Uterus (tissue), 4 donors: ENCODE measurements at regions of chr7 and their contacts with region 1.

Region 1: DNA sequence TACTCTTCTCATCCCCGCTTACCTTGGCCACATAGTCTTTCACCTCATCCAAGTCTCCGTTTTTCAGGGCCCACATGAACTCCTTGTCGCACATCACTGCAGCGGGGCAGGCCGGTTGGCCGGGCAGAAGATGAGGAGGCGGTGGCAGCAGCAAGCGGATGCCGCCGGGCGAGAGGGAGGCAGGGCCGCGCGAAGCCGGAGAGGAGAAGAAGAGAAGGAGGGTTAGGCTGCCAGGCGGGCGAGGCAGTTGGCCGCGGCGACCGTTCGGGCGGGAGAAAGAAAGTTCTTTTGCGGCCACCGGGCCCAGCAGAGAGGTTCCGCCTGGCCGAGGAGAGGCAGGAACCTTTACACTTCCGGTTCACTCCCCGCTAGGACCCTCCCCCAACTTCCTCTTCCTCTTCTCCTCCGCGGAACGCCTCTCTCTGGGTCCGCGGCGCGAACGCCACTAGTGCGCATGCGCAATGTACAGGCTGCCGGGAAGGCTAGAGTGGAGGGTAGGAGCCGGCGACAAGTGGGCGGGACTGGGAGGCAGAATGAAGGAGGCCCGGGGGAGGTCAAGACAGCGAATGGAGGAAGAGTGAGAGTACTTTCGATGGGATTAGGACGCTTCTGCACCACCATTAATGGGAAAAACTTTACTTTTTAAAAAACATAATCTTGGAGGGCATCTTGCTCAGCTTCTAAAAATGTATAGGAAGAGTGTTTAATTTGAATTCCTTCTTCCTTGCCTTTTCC is at the start of gene MTPN:
- DNase-seq: peak; percentile 98 to 99
- H3K4me3 ChIP-seq: peak within 1 kb of the TSS; percentile 71 to 91
- H3K27ac ChIP-seq: peak within 1 kb of the TSS; percentile 68 to 81
- H3K4me1 ChIP-seq: peaks cover 0 to 3% of the 10 kb centered on the region in 2 donors
- H3K27me3 ChIP-seq: no peaks in the 10 kb centered on the region
- CTCF ChIP-seq: peak in 2 of 4 experiments; percentile 7 to 28
- POLR2A ChIP-seq: peak; percentile 40 to 61
- total RNA-seq, gene MTPN: 53.8 to 125 (median 76.8) TPM

Region 2: DNA sequence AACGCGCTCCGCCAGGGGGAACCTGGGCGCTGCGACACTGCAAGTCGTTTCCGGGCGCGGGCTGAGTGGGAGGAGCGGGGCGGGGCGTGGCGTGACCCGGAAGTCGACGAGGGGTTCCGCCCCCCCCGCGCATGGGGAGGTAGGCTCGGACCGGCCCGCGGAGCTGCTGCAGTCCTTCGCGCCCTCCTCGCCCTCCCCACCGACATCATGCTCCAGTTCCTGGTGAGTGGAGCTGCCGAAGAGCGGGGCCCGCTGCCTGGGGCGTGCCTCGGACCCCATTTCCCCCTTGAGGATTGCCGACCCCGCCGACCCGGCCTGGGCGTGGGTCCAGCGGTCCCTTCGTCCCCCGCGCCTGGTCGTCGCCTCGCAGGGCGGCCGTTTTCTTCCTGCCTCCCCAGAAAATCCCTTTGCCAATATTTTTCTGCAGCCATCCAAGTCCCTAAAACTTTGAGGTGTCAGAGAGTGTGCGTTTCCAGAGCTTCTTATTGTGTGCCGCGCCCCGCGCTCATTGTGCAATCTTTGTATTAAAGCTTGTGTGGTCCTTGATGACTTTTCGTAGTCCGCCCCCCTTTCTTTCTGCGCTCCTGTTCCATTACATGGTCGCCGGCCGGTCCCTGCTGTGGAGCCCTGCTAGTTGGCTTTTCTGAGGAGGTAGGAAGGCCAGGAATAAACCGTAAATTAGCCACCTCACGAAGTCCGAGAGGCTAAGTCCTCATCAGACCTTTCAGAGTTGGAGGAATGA is 314.6 kb before region 1 on chr7 and contains the start of gene STMP1:
- intact Hi-C with region 1: loop called (anchors 10 kb)
- DNase-seq: peak; percentile 95
- H3K4me3 ChIP-seq: peak within 1 kb of the TSS; percentile 90 to 98
- H3K27ac ChIP-seq: peak within 1 kb of the TSS; percentile 87 to 96
- H3K4me1 ChIP-seq: peaks cover 0 to 7% of the 10 kb centered on the region in 2 donors
- H3K27me3 ChIP-seq: no peaks in the 10 kb centered on the region
- CTCF ChIP-seq: peak; percentile 87 to 94 (median 93)
- POLR2A ChIP-seq: peak; percentile 78 to 94
- total RNA-seq, gene STMP1: 4.4 to 28.5 (median 23.1) TPM

Region 3: DNA sequence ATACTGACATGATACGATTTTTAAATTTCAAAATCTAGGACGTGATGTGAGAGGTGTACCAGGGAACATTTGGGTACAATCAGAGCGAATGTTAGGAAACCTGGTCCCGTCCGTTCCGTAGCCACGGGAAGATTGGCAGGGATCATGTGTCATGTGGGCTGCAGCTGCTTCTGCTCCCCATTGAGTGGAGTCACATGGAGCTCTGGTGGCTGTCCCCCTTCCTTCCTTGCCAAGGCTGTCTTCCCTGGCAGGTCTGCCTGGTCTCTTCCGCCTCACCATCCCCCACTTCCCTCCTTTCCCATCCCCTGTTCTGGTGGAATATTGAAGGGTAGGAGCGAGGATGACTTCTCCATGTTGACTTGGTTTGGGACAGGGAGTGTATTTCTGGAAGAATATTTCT is 194.8 kb before region 1 on chr7:
- intact Hi-C with region 1: no loop called
- DNase-seq: no peak
- H3K4me3 ChIP-seq: no peak overlapping the region
- H3K27ac ChIP-seq: no peak overlapping the region
- H3K4me1 ChIP-seq: no peaks in the 10 kb centered on the region
- H3K27me3 ChIP-seq: no peaks in the 10 kb centered on the region
- CTCF ChIP-seq: no peak
- POLR2A ChIP-seq: no peak

Region 4: GRCh38 chr7:135911099-135911498 is 66.1 kb before region 1 on chr7:
- intact Hi-C with region 1: no loop called
- DNase-seq: peak; percentile 20 to 37
- H3K4me3 ChIP-seq: no peak overlapping the region
- H3K27ac ChIP-seq: peak overlapping the region in 1 of 2 donors; percentile 17
- H3K4me1 ChIP-seq: no peaks in the 10 kb centered on the region
- H3K27me3 ChIP-seq: no peaks in the 10 kb centered on the region
- CTCF ChIP-seq: no peak
- POLR2A ChIP-seq: no peak

Region 5: GRCh38 chr7:136114966-136115762 is 138.0 kb after region 1 on chr7:
- intact Hi-C with region 1: no loop called
- DNase-seq: peak in 1 of 2 donors; percentile 19
- H3K4me3 ChIP-seq: no peak overlapping the region
- H3K27ac ChIP-seq: no peak overlapping the region
- H3K4me1 ChIP-seq: no peaks in the 10 kb centered on the region
- H3K27me3 ChIP-seq: no peaks in the 10 kb centered on the region
- CTCF ChIP-seq: peak; percentile 30 to 45 (median 44)
- POLR2A ChIP-seq: no peak